GM12878 (cell line): ENCODE measurements at regions of chr4 and their contacts with region 1.

Region 1: DNA sequence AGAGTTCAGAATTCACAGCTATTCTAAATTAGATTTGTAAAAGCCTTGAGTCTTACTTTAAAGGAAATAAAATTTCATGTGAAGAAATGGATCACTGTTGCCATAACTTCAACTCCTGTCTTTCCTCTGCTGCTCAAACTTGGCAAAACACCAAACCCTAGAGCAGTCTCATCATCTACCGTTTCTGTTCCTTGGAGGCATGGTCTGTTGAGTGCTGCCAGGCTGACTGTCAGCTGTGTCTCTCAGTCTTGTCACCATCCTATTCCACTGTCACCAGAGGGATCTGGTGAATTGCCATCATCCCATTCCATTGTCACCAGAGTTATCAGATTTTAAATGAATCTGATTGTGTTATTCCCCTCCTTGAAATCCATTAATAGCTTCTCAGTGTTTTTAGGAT is 55.6 kb downstream of the STIM2 start:
- DNase-seq: no peak
- ATAC-seq: peak; percentile 25; the same call in 1 of the 3 replicates
- H3K4me3 ChIP-seq: no peak overlapping the region
- H3K27ac ChIP-seq: no peak overlapping the region
- H3K4me1 ChIP-seq: peaks cover 7% of the 10 kb centered on the region
- H3K27me3 ChIP-seq: no peaks in the 10 kb centered on the region
- CTCF ChIP-seq: no peak
- EP300 ChIP-seq: no peak
- POLR2A ChIP-seq: no peak
- RAD21 ChIP-seq: no peak

Region 2: DNA sequence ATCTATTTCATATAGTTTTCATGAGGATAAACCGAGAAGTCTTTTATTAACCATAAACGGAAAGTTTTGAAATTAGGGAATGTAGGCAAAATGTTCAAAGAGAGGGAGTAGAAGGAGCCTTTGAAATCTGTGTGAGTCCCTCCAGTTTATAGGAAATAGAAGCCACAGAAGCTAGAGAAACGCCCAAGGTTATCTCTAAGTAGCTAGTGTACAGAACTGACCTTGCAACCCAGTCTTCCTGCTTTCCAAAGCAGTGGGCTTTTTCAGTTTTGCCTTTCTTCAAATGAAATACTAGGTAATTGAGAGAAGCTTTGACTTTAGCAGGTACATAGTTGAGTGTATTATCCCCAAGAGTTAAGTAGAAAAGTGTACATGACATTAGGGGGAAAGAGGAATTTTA is 16.2 kb before region 1 on chr4:
- CTCF ChIA-PET with region 1: interaction called, 3 read pairs
- POLR2A ChIA-PET with region 1: no interaction called
- RAD21 ChIA-PET with region 1: no interaction called
- SMC1A ChIA-PET with region 1: interaction called, 10 read pairs
- in situ Hi-C with region 1: no loop called
- intact Hi-C with region 1: no loop called
- DNase-seq: no peak
- ATAC-seq: peak; percentile 26; the same call in 2 of the 3 replicates
- H3K4me3 ChIP-seq: no peak overlapping the region
- H3K27ac ChIP-seq: no peak overlapping the region
- H3K4me1 ChIP-seq: no peaks in the 10 kb centered on the region
- H3K27me3 ChIP-seq: no peaks in the 10 kb centered on the region
- CTCF ChIP-seq: no peak
- EP300 ChIP-seq: no peak
- POLR2A ChIP-seq: no peak
- RAD21 ChIP-seq: no peak